Colonic mucosa (tissue), 4 donors: ENCODE measurements at regions of chr12 and their contacts with region 1.

Region 1: DNA sequence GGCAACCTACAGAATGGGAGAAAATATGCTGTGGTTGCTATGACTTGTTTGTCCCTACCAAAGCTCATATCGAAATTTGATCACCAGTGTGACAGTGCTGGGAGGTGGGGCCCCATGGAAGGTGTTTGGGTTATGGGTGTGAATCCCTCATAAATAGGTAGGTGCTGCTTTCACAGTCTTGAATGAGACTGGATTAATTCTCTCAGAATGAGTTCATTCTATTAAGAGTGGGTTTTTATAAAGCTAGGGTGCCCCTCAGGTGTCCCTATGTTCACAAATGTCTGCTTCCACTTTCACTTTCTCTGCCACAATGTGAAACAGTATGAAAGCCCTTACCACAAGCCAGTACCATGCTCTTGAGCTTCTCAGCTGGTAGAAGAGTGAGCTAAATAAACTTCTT is 133.5 kb downstream of the CPNE8 start:
- DNase-seq: no peak
- H3K4me3 ChIP-seq: no peak overlapping the region
- H3K27ac ChIP-seq: no peak overlapping the region
- H3K4me1 ChIP-seq: no peaks in the 10 kb centered on the region
- H3K27me3 ChIP-seq: no peaks in the 10 kb centered on the region
- CTCF ChIP-seq: no peak

Region 2: DNA sequence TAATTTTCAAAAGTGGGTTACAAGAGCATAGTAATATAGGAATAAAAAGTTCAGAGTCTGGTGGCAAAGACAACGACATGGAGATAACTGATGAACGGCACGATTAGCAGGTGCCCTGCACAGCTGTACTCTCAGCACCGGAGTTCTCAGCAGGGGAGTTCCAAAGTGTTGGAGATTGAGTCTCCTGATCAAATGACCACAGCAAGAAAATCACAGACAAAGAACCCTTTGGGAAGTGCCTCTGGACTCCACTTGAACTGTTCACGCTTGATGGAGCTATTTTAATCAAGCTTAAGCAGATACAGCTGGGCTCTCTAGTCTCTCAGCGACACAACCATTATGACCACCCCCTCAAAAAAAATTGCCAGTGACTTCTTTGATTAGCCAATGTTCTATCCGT is 302.2 kb before region 1 on chr12:
- intact Hi-C with region 1: no loop called
- DNase-seq: no peak
- H3K4me3 ChIP-seq: no peak overlapping the region
- H3K27ac ChIP-seq: no peak overlapping the region
- H3K4me1 ChIP-seq: no peaks in the 10 kb centered on the region
- H3K27me3 ChIP-seq: no peaks in the 10 kb centered on the region
- CTCF ChIP-seq: no peak

Region 3: DNA sequence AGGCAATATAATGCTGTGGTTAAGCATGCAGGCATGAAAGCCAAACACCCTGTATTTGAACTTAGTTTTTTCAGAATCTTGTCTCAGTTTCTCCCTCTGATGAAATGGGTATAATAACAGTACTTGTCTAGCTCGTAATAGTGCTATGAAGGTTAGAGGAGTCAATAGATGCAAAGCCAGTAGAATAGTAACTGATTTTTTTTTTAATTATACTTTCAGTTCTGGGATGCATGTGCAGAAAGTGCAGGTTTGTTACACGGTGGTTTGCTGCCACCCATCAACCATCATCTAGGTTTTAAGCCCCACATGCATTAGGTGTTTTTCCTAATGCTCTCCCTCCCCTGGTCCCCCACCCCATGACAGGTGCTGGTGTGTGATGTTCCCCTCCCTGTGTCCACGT is 46.1 kb after region 1 on chr12:
- intact Hi-C with region 1: loop called (anchors 5 kb)
- DNase-seq: no peak
- H3K4me3 ChIP-seq: no peak overlapping the region
- H3K27ac ChIP-seq: no peak overlapping the region
- H3K4me1 ChIP-seq: no peaks in the 10 kb centered on the region
- H3K27me3 ChIP-seq: no peaks in the 10 kb centered on the region
- CTCF ChIP-seq: no peak